Testis (tissue), 5 donors: ENCODE measurements at regions of chr11 and their contacts with region 1.

Region 1: GRCh38 chr11:72026090-72026489 is 27.4 kb downstream of the IL18BP start:
- DNase-seq: no peak
- H3K4me3 ChIP-seq: no peak overlapping the region
- H3K27ac ChIP-seq: peak overlapping the region in 1 of 2 donors; percentile 59
- H3K4me1 ChIP-seq: peaks cover 27% of the 10 kb centered on the region
- H3K27me3 ChIP-seq: no peaks in the 10 kb centered on the region
- CTCF ChIP-seq: no peak
- POLR2A ChIP-seq: no peak

Region 2: DNA sequence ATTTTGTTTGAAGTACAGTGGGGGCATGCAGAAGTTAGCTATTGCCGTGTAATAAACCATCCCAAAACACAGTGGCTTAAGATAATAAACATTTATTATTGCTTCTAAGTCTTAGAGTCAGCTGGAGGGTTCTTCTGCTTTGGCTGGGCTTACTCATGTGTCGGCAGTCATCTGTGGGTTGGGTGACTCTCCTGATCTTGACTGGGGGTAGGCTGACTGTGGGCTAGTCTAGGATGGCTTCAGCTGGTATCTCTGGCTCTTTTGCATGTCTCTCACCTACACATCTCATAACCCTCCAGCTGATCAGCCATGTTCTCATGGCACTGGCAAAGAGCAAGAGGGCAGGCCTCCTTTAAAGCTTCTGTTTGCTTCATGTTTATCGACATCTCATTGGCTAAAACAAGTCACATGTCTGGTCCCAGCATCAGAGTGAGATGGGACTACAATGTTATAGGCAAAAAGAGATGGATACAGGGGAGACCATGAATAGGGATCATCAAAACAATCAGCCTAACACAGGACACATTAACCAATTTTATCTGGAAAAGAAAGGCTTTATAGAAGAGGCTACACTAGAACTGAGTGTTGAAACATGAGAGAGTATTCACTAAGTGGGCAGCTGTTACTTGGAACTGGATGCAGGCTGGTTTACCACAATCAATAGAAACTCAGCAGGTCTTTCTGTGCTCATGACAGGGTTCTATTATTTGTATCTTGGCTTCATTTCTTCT is 59.7 kb after region 1 on chr11:
- intact Hi-C with region 1: loop called (anchors 5 kb)
- DNase-seq: no peak
- H3K4me3 ChIP-seq: no peak overlapping the region
- H3K27ac ChIP-seq: no peak overlapping the region
- H3K4me1 ChIP-seq: peaks cover 11% of the 10 kb centered on the region
- H3K27me3 ChIP-seq: no peaks in the 10 kb centered on the region
- CTCF ChIP-seq: no peak
- POLR2A ChIP-seq: no peak